ENCODE measurements at regions of chr12 and their contacts with region 1.

Region 1: GRCh38 chr12:119667577-119668323 is at the start of gene PRKAB1:
- DNase-seq: peak; percentile 98
- H3K4me3 ChIP-seq: peak within 1 kb of the TSS; percentile 73 to 97 (median 86)
- H3K27ac ChIP-seq: peak within 1 kb of the TSS; percentile 96 to 99 (median 98)
- H3K4me1 ChIP-seq: peaks cover 5 to 48% (median 39%) of the 10 kb centered on the region in 4 donors
- H3K27me3 ChIP-seq: no peaks in the 10 kb centered on the region
- CTCF ChIP-seq: peak; percentile 85 to 95 (median 89)
- EP300 ChIP-seq: no peak
- POLR2A ChIP-seq: peak; percentile 98
- total RNA-seq, gene PRKAB1: 46.0 to 151 (median 89.3) TPM

Region 2: GRCh38 chr12:119589097-119589496 is 78.7 kb before region 1 on chr12:
- in situ Hi-C with region 1: no loop called
- intact Hi-C with region 1: no loop called
- DNase-seq: no peak
- H3K4me3 ChIP-seq: no peak overlapping the region
- H3K27ac ChIP-seq: no peak overlapping the region
- H3K4me1 ChIP-seq: no peaks in the 10 kb centered on the region
- H3K27me3 ChIP-seq: peaks cover 23% of the 10 kb centered on the region
- CTCF ChIP-seq: no peak
- EP300 ChIP-seq: no peak
- POLR2A ChIP-seq: no peak

Region 3: DNA sequence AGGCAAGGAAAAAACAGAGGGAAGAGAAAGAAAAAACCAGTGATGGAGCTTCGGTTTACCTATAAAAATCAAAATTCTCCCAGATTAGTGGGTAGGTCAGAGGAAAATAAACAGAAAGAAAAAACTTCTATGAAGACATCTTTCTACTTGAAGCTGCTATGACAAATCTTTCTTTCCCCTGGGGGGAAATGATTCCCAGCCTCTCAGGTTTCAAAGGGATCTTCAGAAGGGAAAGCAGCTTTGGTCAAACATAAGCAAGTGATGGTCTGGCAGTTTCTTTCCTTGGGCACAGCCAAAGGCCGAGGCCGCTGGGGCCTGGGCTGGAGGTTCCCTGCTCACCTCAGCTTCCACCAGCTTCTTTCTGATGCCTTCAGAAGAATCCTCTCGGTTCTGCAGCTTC is 104.7 kb after region 1 on chr12:
- in situ Hi-C with region 1: loop called in 1 of 4 experiments (anchors 10 kb)
- intact Hi-C with region 1: no loop called
- DNase-seq: no peak
- H3K4me3 ChIP-seq: no peak overlapping the region
- H3K27ac ChIP-seq: no peak overlapping the region
- H3K4me1 ChIP-seq: no peaks in the 10 kb centered on the region
- H3K27me3 ChIP-seq: no peaks in the 10 kb centered on the region
- CTCF ChIP-seq: no peak
- EP300 ChIP-seq: no peak
- POLR2A ChIP-seq: no peak

Measured in transverse colon (tissue), 4 donors.